Keratinocyte (primary cell): ENCODE measurements at regions of chr10 and their contacts with region 1.

Region 1: DNA sequence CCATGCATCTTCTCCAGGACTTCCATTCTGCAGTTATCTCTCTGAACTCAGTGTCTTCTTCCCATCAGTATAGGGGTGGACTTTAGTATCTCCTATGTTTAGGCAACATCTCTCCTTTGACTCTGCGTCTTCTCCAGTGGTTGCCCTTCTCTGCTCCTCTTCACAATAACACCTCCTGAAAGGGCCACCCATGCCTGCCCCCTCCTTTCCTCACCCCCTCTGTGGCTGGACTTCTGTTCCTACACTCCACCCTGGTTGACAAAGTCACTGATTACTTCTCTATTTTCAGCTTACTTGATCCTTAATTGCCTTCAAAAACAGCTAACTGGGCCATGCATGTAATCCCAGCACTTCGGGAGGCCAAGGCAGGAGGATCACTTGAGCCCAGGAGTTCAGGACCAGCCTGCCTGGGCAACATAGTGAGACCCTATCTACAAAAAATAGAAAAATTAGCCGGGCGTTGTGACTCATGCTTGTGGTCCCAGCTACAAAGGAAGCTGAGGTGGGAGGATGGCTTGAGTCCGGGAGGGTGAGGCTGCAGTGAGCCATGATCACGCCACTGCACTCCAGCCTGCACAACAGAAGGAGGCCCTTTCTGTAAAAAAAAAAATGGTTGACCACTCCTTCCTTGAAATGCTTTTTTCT is 13.7 kb downstream of the SRGN start:
- DNase-seq: no peak
- H3K4me3 ChIP-seq: no peak overlapping the region
- H3K27ac ChIP-seq: no peak overlapping the region
- H3K4me1 ChIP-seq: no peaks in the 10 kb centered on the region
- H3K27me3 ChIP-seq: no peaks in the 10 kb centered on the region
- CTCF ChIP-seq: no peak

Region 2: DNA sequence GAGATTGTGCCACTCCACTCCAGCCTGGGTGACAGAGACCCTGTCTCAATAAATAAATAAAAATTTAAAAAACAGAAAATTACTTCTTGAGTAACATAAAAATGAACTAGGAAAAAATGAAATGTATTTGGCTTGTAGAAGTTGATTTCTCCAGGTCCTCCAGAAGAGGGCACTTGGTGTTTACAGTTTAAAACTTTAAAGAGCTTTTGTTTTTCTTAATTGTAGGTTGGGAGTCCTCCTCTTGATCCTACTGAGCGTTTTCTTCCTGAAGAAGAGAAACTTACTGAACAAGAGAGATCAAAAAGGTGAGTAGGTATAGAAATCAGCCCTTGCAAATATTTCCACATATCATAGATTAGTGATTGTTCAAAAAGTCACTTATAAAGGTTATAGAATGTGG is 96.8 kb before region 1 on chr10:
- dilution Hi-C with region 1: no loop called
- DNase-seq: no peak
- H3K4me3 ChIP-seq: no peak overlapping the region
- H3K27ac ChIP-seq: no peak overlapping the region
- H3K4me1 ChIP-seq: no peaks in the 10 kb centered on the region
- H3K27me3 ChIP-seq: no peaks in the 10 kb centered on the region
- CTCF ChIP-seq: peak in 1 of 3 experiments; percentile 16

Region 3: GRCh38 chr10:69025370-69025896 is 76.1 kb before region 1 on chr10:
- dilution Hi-C with region 1: loop called (anchors 5 kb)
- DNase-seq: no peak
- H3K4me3 ChIP-seq: no peak overlapping the region
- H3K27ac ChIP-seq: no peak overlapping the region
- H3K4me1 ChIP-seq: no peaks in the 10 kb centered on the region
- H3K27me3 ChIP-seq: no peaks in the 10 kb centered on the region
- CTCF ChIP-seq: no peak

Region 4: GRCh38 chr10:69065406-69066361 is 35.9 kb before region 1 on chr10:
- dilution Hi-C with region 1: loop called (anchors 5 kb)
- DNase-seq: no peak
- H3K4me3 ChIP-seq: no peak overlapping the region
- H3K27ac ChIP-seq: no peak overlapping the region
- H3K4me1 ChIP-seq: peaks cover 21% of the 10 kb centered on the region
- H3K27me3 ChIP-seq: peaks cover 9% of the 10 kb centered on the region
- CTCF ChIP-seq: no peak